Activated CD4-positive, alpha-beta memory T cell treated with anti-CD3 and anti-CD28 coated beads, Interleukin-2, amount 10 ng/mL, durations not matched to agents 7 days and 5 days (primary cell): ENCODE measurements at regions of chr4 and their contacts with region 1.

Region 1: DNA sequence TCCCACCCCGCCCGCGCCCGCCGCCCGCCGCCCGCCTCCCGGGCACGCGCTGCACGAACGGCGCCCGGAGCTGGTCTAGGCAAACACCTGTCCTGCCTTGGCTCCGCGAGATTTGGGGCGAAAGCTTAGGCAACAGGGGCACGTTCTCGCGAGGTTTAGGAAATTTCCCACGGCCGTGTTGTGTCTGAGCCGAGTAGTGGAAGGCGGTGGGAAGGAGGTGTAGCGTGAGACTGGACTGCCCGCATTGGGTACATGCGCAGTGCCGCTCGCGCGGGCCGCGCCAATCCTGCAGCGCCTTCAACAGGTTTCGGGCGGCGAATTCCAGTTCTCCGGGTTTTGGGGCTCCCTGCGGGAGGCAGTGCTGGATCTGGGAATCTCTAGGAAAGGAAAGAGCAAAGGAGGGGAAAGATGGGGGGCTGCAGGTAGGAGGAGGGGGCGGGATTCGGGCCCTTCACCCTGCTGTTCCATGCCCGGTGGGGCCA is 1.3 kb upstream of the RBPJ start:
- DNase-seq: peak; percentile 99
- H3K4me3 Mint-ChIP-seq: peak overlapping the region; percentile 99
- H3K27ac Mint-ChIP-seq: peak overlapping the region; percentile 99
- H3K4me1 Mint-ChIP-seq: peaks cover 36% of the 10 kb centered on the region
- H3K27me3 Mint-ChIP-seq: no peaks in the 10 kb centered on the region

Region 2: GRCh38 chr4:26076000-26076587 is 243.4 kb before region 1 on chr4:
- CTCF ChIA-PET with region 1: interaction called, 25 read pairs
- POLR2A ChIA-PET with region 1: interaction called, 65 read pairs
- DNase-seq: peak; percentile 76
- H3K4me3 Mint-ChIP-seq: peak overlapping the region; percentile 25
- H3K27ac Mint-ChIP-seq: peak overlapping the region; percentile 83
- H3K4me1 Mint-ChIP-seq: peaks cover 76% of the 10 kb centered on the region
- H3K27me3 Mint-ChIP-seq: no peaks in the 10 kb centered on the region

Region 3: DNA sequence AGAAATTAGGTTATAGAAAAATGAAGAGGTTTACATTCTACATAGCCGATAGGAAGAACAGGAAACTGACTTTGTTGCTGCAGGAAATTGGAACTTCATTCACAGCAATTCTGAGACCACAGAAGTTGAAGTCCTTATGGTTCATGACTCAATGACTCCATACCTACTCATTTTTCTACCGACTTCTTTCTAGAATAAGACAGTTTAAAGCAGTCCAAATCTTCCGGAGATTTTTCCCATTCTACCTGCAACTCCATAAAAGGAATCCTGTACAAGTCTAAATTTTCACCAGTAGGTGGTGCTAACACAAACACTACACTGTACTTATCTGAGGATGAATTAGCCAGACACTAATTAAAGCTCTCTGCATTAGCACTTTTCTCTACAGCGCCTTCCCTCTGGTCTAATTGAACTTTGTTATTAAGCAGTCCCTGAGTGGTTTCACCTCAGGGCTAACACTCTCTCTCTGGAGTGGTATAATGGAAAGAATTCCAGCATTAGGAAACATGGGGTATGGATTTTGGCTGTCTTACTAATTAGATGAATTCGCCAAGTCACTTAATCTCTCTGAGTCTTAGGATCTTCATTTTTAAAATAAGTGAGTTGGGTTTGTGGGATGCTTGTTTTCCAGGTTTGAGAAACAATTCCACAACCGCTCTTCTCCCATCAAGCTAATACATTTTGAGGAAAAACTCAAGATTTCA is 237.6 kb before region 1 on chr4:
- CTCF ChIA-PET with region 1: interaction called, 25 read pairs
- POLR2A ChIA-PET with region 1: interaction called, 65 read pairs
- DNase-seq: no peak
- H3K4me3 Mint-ChIP-seq: peak overlapping the region; percentile 2
- H3K27ac Mint-ChIP-seq: peak overlapping the region; percentile 75
- H3K4me1 Mint-ChIP-seq: peaks cover 82% of the 10 kb centered on the region
- H3K27me3 Mint-ChIP-seq: no peaks in the 10 kb centered on the region

Region 4: GRCh38 chr4:26197018-26197779 is 122.3 kb before region 1 on chr4:
- CTCF ChIA-PET with region 1: interaction called, 14 read pairs
- POLR2A ChIA-PET with region 1: interaction called, 51 read pairs
- DNase-seq: peak; percentile 87
- H3K4me3 Mint-ChIP-seq: peak overlapping the region; percentile 62
- H3K27ac Mint-ChIP-seq: peak overlapping the region; percentile 91
- H3K4me1 Mint-ChIP-seq: peaks cover 69% of the 10 kb centered on the region
- H3K27me3 Mint-ChIP-seq: peaks cover 23% of the 10 kb centered on the region

Region 5: GRCh38 chr4:26267087-26267486 is 52.4 kb before region 1 on chr4:
- CTCF ChIA-PET with region 1: no interaction called
- POLR2A ChIA-PET with region 1: no interaction called
- DNase-seq: no peak
- H3K4me3 Mint-ChIP-seq: no peak overlapping the region
- H3K27ac Mint-ChIP-seq: no peak overlapping the region
- H3K4me1 Mint-ChIP-seq: peaks cover 12% of the 10 kb centered on the region
- H3K27me3 Mint-ChIP-seq: peaks cover 2% of the 10 kb centered on the region

Region 6: DNA sequence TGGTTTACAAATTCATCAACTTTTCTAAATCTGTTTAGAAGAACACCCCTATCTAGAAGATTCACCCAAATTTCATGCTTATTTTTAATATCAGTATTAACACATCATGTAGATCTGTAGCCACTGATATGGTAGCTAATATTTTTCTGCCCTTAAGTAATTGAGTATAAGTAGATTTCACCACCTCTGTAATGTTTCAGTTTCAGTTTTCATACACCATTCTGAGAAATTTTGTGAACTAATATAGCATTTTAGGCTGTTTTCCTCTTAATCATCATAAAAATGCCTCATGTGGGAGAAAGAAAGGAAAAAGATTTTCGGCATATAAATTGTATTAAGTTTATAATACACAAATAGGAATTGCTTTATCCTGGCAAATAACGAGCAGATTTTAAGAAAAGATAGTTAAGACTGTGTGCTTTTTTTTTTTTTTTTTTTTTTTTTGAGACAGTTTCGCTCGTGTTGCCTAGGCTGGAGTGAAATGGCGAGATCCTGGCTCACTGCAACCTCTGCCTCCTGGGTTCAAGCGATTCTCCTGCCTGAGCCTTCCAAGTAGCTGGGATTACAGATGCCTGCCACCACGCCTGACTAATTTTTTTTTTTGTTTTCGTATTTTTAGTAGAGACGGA is 20.1 kb before region 1 on chr4:
- CTCF ChIA-PET with region 1: interaction called, 7 read pairs
- POLR2A ChIA-PET with region 1: interaction called, 15 read pairs
- DNase-seq: no peak
- H3K4me3 Mint-ChIP-seq: peak overlapping the region; percentile 65
- H3K27ac Mint-ChIP-seq: peak overlapping the region; percentile 77
- H3K4me1 Mint-ChIP-seq: peaks cover 36% of the 10 kb centered on the region
- H3K27me3 Mint-ChIP-seq: no peaks in the 10 kb centered on the region

Region 7: GRCh38 chr4:26308568-26308967 is 10.9 kb before region 1 on chr4:
- CTCF ChIA-PET with region 1: interaction called, 10 read pairs
- POLR2A ChIA-PET with region 1: interaction called, 18 read pairs
- DNase-seq: no peak
- H3K4me3 Mint-ChIP-seq: no peak overlapping the region
- H3K27ac Mint-ChIP-seq: peak overlapping the region; percentile 33
- H3K4me1 Mint-ChIP-seq: peaks cover 37% of the 10 kb centered on the region
- H3K27me3 Mint-ChIP-seq: no peaks in the 10 kb centered on the region

Region 8: DNA sequence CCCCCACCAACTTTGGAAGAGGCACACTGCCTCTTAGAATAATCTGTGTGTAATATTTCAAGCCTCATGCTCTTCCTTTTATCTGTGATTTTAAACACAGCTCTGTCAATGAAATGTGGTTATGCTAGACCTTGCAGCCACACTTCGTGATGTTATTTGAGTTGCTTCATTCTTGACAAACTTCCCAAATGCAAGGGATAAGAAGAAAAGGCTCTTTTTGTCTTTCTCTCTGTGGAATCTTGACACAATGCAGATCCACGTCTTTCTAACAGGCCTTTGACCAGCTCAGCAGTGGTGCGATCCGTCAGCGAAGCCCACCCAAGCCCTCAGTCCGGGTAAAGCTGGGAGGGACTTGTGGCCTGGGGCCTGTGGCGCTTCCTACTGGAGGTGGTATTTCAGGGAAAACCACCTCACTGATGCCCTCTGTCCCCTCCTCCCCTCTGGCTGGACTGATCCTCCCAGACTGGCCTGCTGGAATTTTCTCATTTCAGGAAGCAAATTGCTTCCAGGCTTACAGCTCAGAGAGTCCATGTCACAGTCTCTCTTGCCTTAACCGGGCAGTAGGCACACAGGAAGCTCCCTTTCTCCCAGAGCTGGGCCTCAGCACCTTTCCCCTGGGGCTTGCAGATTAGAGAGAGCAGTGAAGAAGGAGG is 190.3 kb after region 1 on chr4:
- CTCF ChIA-PET with region 1: no interaction called
- POLR2A ChIA-PET with region 1: no interaction called
- DNase-seq: no peak
- H3K4me3 Mint-ChIP-seq: no peak overlapping the region
- H3K27ac Mint-ChIP-seq: no peak overlapping the region
- H3K4me1 Mint-ChIP-seq: no peaks in the 10 kb centered on the region
- H3K27me3 Mint-ChIP-seq: peaks cover 6% of the 10 kb centered on the region

Region 9: DNA sequence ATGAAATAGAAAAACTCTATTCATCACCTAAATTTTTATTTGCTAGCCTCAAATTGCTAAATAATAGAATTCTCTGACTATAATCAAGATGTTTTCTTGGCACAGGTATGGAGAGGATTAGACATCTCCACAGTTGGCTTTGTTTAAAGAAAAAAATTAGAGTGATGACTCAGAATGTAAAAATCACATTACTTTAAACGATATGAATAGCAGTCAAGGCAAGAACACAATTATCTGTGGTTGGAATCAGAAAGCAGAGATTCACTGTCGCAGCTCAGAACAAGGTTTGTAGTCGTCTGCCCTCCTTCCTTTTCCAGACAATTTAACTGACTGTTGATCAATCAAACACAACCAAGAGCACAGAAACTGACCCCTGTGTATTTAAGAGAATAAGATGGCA is 203.0 kb after region 1 on chr4:
- CTCF ChIA-PET with region 1: no interaction called
- POLR2A ChIA-PET with region 1: no interaction called
- DNase-seq: no peak
- H3K4me3 Mint-ChIP-seq: no peak overlapping the region
- H3K27ac Mint-ChIP-seq: no peak overlapping the region
- H3K4me1 Mint-ChIP-seq: no peaks in the 10 kb centered on the region
- H3K27me3 Mint-ChIP-seq: peaks cover 4% of the 10 kb centered on the region

Region 10: DNA sequence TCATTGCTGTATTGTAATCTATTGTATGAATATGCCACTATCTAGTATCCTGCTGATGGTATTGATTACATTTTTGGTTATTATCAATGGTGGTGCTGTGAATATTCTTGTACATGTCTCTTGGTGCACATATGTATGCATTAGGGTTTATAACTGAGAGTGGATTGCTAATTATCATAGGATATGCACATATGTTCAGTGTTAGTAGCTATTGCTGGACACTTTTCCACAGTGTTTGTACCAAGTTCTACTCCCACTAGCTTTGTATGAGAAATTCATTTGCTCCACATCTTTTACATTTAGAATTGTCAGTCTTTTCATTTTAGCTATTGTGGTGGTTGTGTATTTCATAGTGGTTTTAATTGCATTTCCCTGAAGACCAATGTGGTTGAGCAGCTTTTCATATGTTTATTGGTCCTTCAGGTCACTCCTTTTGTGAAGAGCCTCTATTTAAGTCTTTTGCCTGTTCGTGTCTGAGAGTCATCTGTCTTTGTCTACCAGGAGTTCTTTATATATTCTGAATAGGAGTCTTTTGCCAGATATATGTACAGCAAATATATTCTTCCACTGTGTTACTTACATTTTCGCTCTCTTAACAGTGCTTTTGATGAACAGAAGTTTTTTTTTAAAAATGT is 351.5 kb after region 1 on chr4:
- CTCF ChIA-PET with region 1: no interaction called
- POLR2A ChIA-PET with region 1: no interaction called
- DNase-seq: no peak
- H3K4me3 Mint-ChIP-seq: no peak overlapping the region
- H3K27ac Mint-ChIP-seq: no peak overlapping the region
- H3K4me1 Mint-ChIP-seq: no peaks in the 10 kb centered on the region
- H3K27me3 Mint-ChIP-seq: no peaks in the 10 kb centered on the region